ENCODE measurements at regions of chr6 and their contacts with region 1.

Region 1: GRCh38 chr6:35146453-35146852 is 5.3 kb upstream of the TCP11 start:
- DNase-seq: peak in 8 of 10 donors; percentile 35 to 74 (median 50)
- H3K4me3 ChIP-seq: no peak overlapping the region
- H3K27ac ChIP-seq: peak overlapping the region in 1 of 59 donors; percentile 6
- H3K27me3 ChIP-seq: peaks cover 0 to 2% (median 0%) of the 10 kb centered on the region in 45 donors
- CTCF ChIP-seq: peak in 55 of 56 donors; percentile 35 to 85 (median 63)

Region 2: GRCh38 chr6:35202066-35202546 is 55.7 kb after region 1 on chr6:
- intact Hi-C with region 1: loop called (anchors 1 to 5 kb)
- DNase-seq: no peak
- H3K4me3 ChIP-seq: no peak overlapping the region
- H3K27ac ChIP-seq: no peak overlapping the region
- H3K27me3 ChIP-seq: peaks cover 0 to 3% (median 0%) of the 10 kb centered on the region in 45 donors
- CTCF ChIP-seq: no peak

Region 3: DNA sequence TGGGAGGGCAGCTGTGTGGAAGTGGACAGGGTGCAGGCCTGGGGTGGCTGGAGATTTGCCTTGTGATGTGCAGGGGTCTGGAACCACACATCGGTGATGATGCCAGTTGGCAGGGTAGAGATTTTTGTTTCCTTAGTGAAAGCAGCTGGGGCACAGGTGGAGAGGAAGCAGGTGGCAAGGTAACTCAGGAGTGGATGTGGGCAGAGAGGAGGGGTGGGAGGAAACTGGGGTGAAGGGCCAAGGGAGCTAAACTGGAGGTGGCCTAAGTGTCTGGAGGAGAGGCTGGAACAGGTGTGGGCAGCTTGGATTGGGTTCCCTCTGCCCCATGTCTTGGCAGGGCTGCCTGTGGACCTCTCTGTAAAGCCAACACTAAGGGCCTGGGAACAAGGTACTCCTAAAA is 62.6 kb after region 1 on chr6:
- intact Hi-C with region 1: loop called (anchors 1 to 5 kb)
- DNase-seq: no peak
- H3K4me3 ChIP-seq: no peak overlapping the region
- H3K27ac ChIP-seq: no peak overlapping the region
- H3K27me3 ChIP-seq: peaks cover 0 to 14% (median 0%) of the 10 kb centered on the region in 45 donors
- CTCF ChIP-seq: no peak

Region 4: GRCh38 chr6:35240840-35241801 is 94.7 kb after region 1 on chr6:
- intact Hi-C with region 1: loop called (anchors 1 to 5 kb)
- DNase-seq: peak; percentile 58 to 85 (median 76)
- H3K4me3 ChIP-seq: no peak overlapping the region
- H3K27ac ChIP-seq: peak overlapping the region in 1 of 59 donors; percentile 4
- H3K27me3 ChIP-seq: no peaks in the 10 kb centered on the region
- CTCF ChIP-seq: peak; percentile 84 to 99 (median 95)

Region 5: GRCh38 chr6:35359751-35360348 is 213.4 kb after region 1 on chr6:
- intact Hi-C with region 1: no loop called
- DNase-seq: peak in 7 of 10 donors; percentile 24 to 74 (median 55)
- H3K4me3 ChIP-seq: peak overlapping the region in 1 of 59 donors; percentile 25
- H3K27ac ChIP-seq: peak overlapping the region; percentile 8 to 92 (median 77)
- H3K27me3 ChIP-seq: no peaks in the 10 kb centered on the region
- CTCF ChIP-seq: no peak

Region 6: DNA sequence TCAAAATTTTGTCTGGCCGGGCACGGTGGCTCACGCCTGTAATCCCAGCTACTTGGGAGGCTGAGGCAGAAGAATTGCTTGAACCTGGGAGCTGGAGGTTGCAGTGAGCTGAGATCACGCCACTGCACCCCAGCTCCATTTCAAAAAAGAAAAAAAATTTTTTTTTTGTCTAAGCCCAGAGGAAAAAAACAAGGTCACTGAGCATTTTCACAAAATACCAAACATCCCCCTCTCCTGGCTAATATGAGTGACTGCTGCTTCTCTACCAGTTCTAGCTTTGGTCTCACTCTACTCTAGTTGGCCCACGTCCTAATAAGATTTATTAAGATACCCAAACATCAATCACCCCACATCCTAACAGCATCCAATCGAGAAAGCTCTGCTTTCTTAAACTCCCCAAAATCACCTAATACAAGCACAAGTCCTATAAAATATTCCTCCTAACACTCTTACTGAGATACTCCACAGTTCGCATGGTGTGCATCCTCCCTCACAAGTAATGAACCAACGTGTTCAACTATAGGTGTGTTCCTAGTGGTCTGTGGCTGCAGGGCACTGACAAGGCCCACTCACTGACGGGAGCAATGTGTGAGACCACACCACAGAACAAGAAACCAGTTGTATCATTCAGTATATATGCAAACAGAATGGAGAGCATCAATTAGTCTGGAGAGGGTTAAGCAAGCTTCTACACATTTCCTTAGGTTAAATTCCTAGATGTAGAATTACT is 478.1 kb after region 1 on chr6:
- intact Hi-C with region 1: no loop called
- DNase-seq: no peak
- H3K4me3 ChIP-seq: no peak overlapping the region
- H3K27ac ChIP-seq: peak overlapping the region in 5 of 59 donors; percentile 7 to 44 (median 17)
- H3K27me3 ChIP-seq: no peaks in the 10 kb centered on the region
- CTCF ChIP-seq: peak in 18 of 56 donors; percentile 9 to 38 (median 24)

Measured in dorsolateral prefrontal cortex (tissue), 120 donors.